Activated CD4-positive, alpha-beta T cell treated with anti-CD3 and anti-CD28 coated beads, Interleukin-2, amount 10 ng/mL, durations not matched to agents 7 days and 5 days (primary cell): ENCODE measurements at regions of chr6 and their contacts with region 1.

Region 1: DNA sequence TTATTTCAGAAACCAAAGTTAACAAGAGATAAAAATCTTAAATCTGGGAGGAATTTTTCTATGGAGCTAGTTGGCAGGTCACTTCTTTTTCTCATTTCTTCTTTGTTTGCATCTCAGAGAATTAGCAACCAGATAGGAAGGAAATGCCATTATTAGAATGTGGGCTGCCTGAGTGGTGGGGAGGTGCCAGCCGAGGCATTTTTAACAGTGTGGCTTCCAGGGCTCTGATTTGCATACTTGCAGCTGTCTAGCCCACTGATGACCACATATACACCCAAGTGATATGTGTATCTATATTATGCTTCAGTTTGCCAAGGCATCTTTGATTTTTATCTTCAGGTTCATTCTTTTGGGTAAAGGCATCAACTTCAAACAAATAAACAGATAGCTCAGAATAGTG is 206.7 kb downstream of the CLIC5 start:
- DNase-seq: no peak
- H3K4me3 Mint-ChIP-seq: no peak overlapping the region
- H3K27ac Mint-ChIP-seq: no peak overlapping the region
- H3K4me1 Mint-ChIP-seq: peaks cover under 1% of the 10 kb centered on the region
- H3K27me3 Mint-ChIP-seq: no peaks in the 10 kb centered on the region

Region 2: DNA sequence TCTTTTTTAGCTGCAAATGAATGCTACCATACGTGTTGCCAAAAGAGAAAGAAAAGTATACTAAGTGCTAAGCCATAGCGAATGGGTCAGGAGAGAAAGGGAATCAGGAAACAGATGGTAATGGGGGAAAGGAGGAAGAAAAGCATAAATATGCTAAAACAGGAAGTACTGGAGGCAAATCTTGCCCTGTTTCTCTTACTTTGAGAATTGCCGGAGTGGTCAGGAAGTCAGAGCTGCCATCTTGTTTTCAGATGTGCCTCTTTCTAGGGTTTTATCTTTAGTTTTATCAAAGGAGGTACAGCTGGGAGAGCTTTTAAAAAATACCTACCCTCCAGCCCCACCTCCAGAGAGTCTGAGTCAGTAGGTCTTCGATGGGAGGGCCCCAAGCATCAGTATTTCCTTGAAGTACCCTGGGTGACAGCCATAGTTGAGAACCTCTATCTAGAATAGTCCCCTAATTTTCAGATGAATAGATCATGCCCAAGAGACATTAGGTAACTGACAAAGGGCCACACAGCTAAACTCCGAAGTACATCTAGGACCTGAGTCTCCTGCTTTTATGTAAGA is 13.4 kb after region 1 on chr6:
- CTCF ChIA-PET with region 1: interaction called, 27 read pairs
- POLR2A ChIA-PET with region 1: no interaction called
- DNase-seq: no peak
- H3K4me3 Mint-ChIP-seq: no peak overlapping the region
- H3K27ac Mint-ChIP-seq: peak overlapping the region; percentile 55
- H3K4me1 Mint-ChIP-seq: peaks cover 16% of the 10 kb centered on the region
- H3K27me3 Mint-ChIP-seq: no peaks in the 10 kb centered on the region